ENCODE measurements at regions of chr9 and their contacts with region 1.

Region 1: DNA sequence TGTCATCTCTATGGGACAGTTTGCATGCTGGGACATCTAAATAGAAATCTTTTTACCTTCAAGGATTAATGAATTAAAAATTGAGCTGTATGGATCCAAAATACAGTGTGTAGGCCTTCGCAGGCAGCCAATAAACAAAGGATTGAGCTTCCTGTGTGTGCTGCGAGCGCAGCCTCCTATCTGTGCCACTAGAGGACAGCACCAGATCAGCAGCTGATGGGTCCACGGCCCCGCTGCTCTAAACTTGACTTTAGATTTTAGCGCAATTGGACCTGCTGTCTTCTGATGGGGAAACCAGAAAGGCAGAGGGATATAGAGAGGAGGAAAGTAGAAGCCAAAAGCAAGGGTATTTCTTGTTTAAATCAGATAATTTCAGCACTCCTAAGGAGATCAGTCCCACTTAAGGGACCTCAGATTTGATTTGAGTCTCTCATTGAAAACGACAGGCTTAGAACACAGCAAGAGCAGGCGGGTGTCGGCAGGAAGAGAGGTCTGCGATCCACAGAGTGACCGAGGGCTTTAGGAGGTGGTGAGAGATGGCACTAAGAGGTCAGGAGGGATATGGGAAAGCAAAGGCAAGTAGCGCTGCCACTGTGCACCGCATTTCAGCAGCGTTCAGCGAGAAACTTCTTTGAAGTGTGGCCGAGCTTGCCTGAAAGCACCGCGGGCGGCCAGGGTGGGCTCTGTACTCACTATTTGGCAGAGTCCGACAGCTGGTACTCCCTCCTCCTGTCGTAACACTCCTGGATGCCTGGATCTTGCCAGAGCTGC is 214.3 kb downstream of the GNA14 start:
- DNase-seq: peak; percentile 45 to 74 (median 52)
- ATAC-seq: peak; percentile 68 to 89 (median 82)
- H3K4me3 ChIP-seq: no peak overlapping the region
- H3K27ac ChIP-seq: no peak overlapping the region
- H3K4me1 ChIP-seq: peaks cover 0 to 5% (median 0%) of the 10 kb centered on the region in 12 donors
- H3K27me3 ChIP-seq: no peaks in the 10 kb centered on the region
- CTCF ChIP-seq: peak; percentile 84 to 98 (median 92)
- POLR2A ChIP-seq: no peak

Region 2: DNA sequence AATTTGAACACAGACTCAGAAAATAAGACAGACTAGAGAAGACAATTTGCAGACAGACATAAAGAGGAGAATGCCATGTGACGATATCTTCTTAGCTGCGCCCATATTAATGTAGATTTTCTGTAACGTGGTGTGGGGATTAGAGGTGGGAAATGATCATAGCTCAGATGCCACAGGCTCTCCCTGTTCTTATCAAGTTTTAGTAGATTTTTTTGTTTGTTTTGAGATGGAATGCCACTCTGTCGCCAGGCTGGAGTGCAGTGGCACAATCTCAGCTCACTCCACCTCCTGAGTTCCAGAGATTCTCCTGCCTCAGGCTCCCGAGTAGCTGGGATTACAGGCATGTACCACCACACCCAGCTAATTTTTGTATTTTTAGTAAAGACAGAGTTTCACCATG is 197.2 kb before region 1 on chr9:
- intact Hi-C with region 1: no loop called
- DNase-seq: no peak
- ATAC-seq: no peak
- H3K4me3 ChIP-seq: no peak overlapping the region
- H3K27ac ChIP-seq: no peak overlapping the region
- H3K4me1 ChIP-seq: no peaks in the 10 kb centered on the region
- H3K27me3 ChIP-seq: no peaks in the 10 kb centered on the region
- CTCF ChIP-seq: no peak
- POLR2A ChIP-seq: no peak

Region 3: DNA sequence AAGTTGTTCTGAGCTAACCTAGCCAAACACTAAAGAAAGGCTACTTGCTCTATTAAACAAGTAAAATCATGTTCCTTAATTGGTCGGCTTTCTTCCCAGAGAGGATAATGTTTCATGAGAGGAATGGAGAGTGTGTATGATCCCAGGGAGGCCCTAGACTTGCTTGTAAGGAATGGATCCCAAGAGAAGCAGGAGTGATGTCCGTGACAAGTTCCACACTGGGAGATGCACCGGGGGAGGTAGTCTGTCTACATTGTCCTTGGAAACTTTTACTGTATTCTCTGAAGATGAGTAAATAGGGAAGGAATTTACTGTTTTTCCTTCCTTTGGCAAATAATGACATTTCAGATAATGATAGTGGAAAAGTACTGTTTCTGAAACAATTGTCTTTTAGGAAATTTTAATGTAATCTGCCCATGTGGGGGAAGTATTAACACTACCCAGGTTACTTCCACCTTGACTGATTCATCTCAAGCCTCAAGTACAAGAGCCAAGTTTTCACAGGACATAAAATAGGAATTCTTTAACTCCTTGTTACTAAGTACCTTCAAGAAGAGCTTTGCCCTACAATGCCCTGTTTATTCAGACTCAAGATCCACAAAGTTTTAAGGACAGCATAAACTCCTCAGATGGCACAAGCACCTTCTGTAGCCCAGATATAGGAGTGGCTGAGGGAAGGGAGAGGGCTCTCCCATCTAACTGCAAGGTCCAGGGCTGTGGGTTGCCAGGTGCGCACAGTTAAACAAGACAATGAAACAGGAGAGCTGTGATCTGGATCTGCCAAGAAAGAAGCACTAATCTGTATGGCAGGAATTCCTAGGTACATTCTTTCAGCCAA is 62.2 kb after region 1 on chr9:
- intact Hi-C with region 1: no loop called
- DNase-seq: peak in 1 of 5 donors; percentile 36
- ATAC-seq: peak in 3 of 4 donors; percentile 64 to 85 (median 85)
- H3K4me3 ChIP-seq: no peak overlapping the region
- H3K27ac ChIP-seq: peak overlapping the region in 8 of 12 donors; percentile 13 to 57 (median 48)
- H3K4me1 ChIP-seq: peaks cover 0 to 29% (median 5%) of the 10 kb centered on the region in 12 donors
- H3K27me3 ChIP-seq: no peaks in the 10 kb centered on the region
- CTCF ChIP-seq: no peak
- POLR2A ChIP-seq: no peak

Region 4: DNA sequence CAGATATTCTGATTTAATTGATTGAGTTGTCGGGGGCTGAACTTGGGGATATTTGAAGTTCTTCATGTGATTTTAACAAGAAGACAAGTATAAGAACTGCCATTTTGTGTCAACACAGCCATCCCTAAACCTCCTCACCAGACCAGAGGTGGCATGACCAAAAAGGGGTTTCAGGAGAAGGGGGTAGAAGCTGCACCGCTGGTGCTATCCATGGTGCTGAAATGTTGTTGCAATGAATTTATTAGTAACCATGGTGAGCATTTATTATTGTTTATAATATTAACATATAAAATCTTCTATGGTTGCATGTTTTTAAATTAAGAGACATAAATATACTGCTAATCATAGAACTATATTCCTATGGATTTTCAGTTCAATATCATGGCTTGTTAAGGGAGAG is 141.9 kb after region 1 on chr9:
- intact Hi-C with region 1: no loop called
- DNase-seq: no peak
- ATAC-seq: no peak
- H3K4me3 ChIP-seq: no peak overlapping the region
- H3K27ac ChIP-seq: no peak overlapping the region
- H3K4me1 ChIP-seq: peaks cover 0 to 2% (median 0%) of the 10 kb centered on the region in 12 donors
- H3K27me3 ChIP-seq: no peaks in the 10 kb centered on the region
- CTCF ChIP-seq: no peak
- POLR2A ChIP-seq: no peak

Region 5: GRCh38 chr9:77751341-77752091 is 317.7 kb after region 1 on chr9:
- intact Hi-C with region 1: loop called in 5 of 10 experiments (anchors 2 to 5 kb)
- DNase-seq: peak in 2 of 5 donors; percentile 30 to 36
- ATAC-seq: peak in 3 of 4 donors; percentile 60 to 80 (median 76)
- H3K4me3 ChIP-seq: no peak overlapping the region
- H3K27ac ChIP-seq: peak overlapping the region in 2 of 12 donors; percentile 24 to 61
- H3K4me1 ChIP-seq: peaks cover 0 to 14% (median 6%) of the 10 kb centered on the region in 12 donors
- H3K27me3 ChIP-seq: no peaks in the 10 kb centered on the region
- CTCF ChIP-seq: peak; percentile 35 to 67 (median 52)
- POLR2A ChIP-seq: no peak